Esophagus muscularis mucosa (tissue), 4 donors: ENCODE measurements at regions of chr3 and their contacts with region 1.

Region 1: GRCh38 chr3:116863822-116864589 is 154.4 kb downstream of the TUSC7 start:
- DNase-seq: no peak
- H3K4me3 ChIP-seq: peak overlapping the region; percentile 21 to 55 (median 40)
- H3K27ac ChIP-seq: no peak overlapping the region
- H3K4me1 ChIP-seq: peaks cover 0 to 11% (median 4%) of the 10 kb centered on the region in 4 donors
- H3K27me3 ChIP-seq: peaks cover 0 to 11% (median 2%) of the 10 kb centered on the region in 4 donors
- CTCF ChIP-seq: peak in 2 of 3 experiments; percentile 27 to 55
- EP300 ChIP-seq: no peak
- POLR2A ChIP-seq: no peak

Region 2: DNA sequence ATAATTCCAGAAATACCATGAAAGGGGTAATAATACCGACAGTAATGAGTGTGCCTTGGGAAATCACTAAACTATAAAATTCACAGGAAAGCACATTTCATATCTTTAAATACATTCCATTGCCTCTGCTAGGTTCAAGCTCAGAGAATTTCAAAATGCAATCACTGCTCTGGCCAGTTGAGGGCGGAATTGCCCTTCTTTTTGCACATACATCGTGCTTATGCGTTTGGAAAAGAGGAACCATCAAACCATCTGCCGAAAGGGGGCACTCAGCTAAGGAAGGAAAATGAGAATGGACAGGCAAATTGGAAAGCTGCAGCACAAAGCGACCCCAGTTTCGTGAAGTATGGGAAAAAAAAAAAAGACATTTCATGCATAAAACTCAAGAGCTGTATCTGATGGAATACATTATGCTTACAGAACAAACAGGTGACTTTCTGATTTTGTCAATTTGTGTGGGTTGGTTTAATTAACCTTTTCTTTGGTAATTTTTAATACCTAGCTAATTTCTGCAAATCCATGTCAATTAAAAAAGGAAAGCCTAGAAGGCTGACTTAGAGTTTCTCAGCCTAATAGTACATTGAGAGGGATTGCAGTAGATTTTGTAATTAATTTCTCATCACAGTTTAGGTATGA is 93.1 kb before region 1 on chr3:
- intact Hi-C with region 1: loop called (anchors 5 kb)
- DNase-seq: no peak
- H3K4me3 ChIP-seq: no peak overlapping the region
- H3K27ac ChIP-seq: no peak overlapping the region
- H3K4me1 ChIP-seq: no peaks in the 10 kb centered on the region
- H3K27me3 ChIP-seq: no peaks in the 10 kb centered on the region
- CTCF ChIP-seq: peak; percentile 75 to 87 (median 79)
- EP300 ChIP-seq: no peak
- POLR2A ChIP-seq: no peak

Region 3: GRCh38 chr3:117026401-117026800 is 162.4 kb after region 1 on chr3:
- intact Hi-C with region 1: loop called (anchors 10 kb)
- DNase-seq: no peak
- H3K4me3 ChIP-seq: no peak overlapping the region
- H3K27ac ChIP-seq: no peak overlapping the region
- H3K4me1 ChIP-seq: no peaks in the 10 kb centered on the region
- H3K27me3 ChIP-seq: no peaks in the 10 kb centered on the region
- CTCF ChIP-seq: no peak
- EP300 ChIP-seq: no peak
- POLR2A ChIP-seq: no peak

Region 4: GRCh38 chr3:117355566-117355965 is 491.6 kb after region 1 on chr3:
- intact Hi-C with region 1: loop called (anchors 10 kb)
- DNase-seq: no peak
- H3K4me3 ChIP-seq: no peak overlapping the region
- H3K27ac ChIP-seq: no peak overlapping the region
- H3K4me1 ChIP-seq: no peaks in the 10 kb centered on the region
- H3K27me3 ChIP-seq: no peaks in the 10 kb centered on the region
- CTCF ChIP-seq: peak in 2 of 3 experiments; percentile 15 to 31
- EP300 ChIP-seq: no peak
- POLR2A ChIP-seq: no peak

Region 5: GRCh38 chr3:117526470-117527079 is 662.6 kb after region 1 on chr3:
- intact Hi-C with region 1: loop called (anchors 10 kb)
- DNase-seq: no peak
- H3K4me3 ChIP-seq: no peak overlapping the region
- H3K27ac ChIP-seq: no peak overlapping the region
- H3K4me1 ChIP-seq: peaks cover 0 to 8% (median 5%) of the 10 kb centered on the region in 4 donors
- H3K27me3 ChIP-seq: no peaks in the 10 kb centered on the region
- CTCF ChIP-seq: peak; percentile 20 to 51 (median 46)
- EP300 ChIP-seq: no peak
- POLR2A ChIP-seq: no peak

Region 6: GRCh38 chr3:117719316-117719926 is 855.4 kb after region 1 on chr3:
- intact Hi-C with region 1: loop called (anchors 10 kb)
- DNase-seq: no peak
- H3K4me3 ChIP-seq: no peak overlapping the region
- H3K27ac ChIP-seq: no peak overlapping the region
- H3K4me1 ChIP-seq: no peaks in the 10 kb centered on the region
- H3K27me3 ChIP-seq: no peaks in the 10 kb centered on the region
- CTCF ChIP-seq: peak; percentile 44 to 74 (median 60)
- EP300 ChIP-seq: no peak
- POLR2A ChIP-seq: no peak